Body of pancreas (tissue), 4 donors: ENCODE measurements at regions of chr6 and their contacts with region 1.

Region 1: DNA sequence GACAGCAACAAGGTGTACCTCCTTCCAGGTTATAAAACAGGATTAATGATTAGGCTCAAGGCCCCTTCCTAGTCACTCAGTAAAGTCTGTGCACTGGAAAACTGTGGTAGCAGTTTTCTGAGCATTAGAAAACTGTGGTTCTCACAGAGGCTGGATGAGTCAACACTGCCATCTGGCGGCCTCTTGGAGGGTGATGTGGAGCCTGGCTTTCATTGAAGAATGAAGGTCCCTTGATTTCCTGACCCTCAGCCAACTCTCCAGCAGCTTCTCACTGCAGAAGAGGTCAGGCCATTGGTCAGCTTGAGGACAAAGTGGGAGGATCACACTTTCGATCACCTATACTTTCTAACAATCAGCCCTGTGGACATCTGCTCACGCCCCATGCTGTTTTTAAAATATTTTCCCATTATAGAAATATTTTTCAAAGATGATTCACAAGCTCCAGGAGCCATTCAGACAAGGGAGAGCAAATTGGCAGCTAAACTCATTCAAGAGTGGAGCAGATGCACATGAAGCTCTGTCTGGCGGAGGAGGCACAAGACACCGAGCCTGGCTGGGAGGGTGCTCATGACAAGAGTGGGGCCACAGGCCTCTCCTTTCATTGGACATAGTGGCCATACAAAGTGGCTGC is 23.2 kb downstream of the PSMB1 start:
- DNase-seq: peak; percentile 81 to 87 (median 84)
- ATAC-seq: peak; percentile 91
- H3K4me3 ChIP-seq: no peak overlapping the region
- H3K27ac ChIP-seq: no peak overlapping the region
- H3K4me1 ChIP-seq: no peaks in the 10 kb centered on the region
- H3K27me3 ChIP-seq: no peaks in the 10 kb centered on the region
- CTCF ChIP-seq: peak; percentile 79 to 89 (median 83)
- POLR2A ChIP-seq: no peak

Region 2: DNA sequence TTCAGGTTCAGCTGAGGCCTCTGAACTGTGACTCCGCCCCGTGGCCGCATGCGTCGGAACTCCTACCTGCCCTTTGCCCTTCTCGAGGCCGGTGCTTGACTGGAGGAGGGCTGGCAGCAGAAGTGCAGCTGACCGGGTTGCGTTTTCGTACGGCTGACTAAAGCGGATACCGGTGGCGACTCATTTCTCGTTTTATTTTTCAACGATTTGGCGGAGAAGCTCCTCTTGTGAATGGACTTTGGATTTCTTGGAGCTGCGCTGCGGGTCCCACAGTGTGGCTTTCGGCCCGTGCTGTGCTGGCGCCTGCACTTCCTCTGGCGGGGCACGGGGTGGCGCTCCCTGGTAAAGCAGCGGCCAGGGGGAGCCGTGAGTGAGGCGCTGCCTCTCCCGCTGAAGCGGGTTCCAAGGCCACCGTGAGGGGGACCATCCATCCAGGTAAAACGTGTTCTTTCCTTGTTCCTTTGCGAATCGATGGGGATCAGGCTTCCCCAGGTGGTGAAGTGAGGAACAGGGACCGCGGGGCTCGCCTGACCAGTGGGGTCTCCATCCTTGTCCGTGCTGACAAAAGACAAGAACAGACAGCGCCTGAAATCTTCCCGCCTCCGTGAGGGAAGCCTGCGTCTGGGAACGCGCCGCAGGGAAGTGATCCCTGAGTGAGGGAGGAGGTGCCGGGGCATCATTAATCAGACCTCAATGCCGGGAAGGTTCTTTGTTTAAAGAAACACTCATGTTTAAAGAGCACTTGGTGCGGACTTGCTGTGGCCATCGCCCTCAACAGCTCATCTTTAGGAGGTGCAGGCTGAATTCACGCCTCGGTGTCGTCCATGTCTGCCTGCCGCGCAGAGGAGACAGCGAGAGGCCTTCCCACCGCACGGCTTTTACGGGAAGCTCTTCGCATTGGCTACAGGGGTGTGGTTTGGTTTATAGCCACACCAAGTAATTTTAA is 739.7 kb before region 1 on chr6:
- intact Hi-C with region 1: loop called (anchors 10 kb)
- DNase-seq: peak; percentile 68 to 72 (median 71)
- ATAC-seq: peak; percentile 92
- H3K4me3 ChIP-seq: no peak overlapping the region
- H3K27ac ChIP-seq: peak overlapping the region; percentile 7 to 64 (median 46)
- H3K4me1 ChIP-seq: peaks cover 16% of the 10 kb centered on the region
- H3K27me3 ChIP-seq: no peaks in the 10 kb centered on the region
- CTCF ChIP-seq: peak; percentile 93 to 98 (median 98)
- POLR2A ChIP-seq: peak in 1 of 3 donors; percentile 11

Region 3: GRCh38 chr6:169824021-169824420 is 705.9 kb before region 1 on chr6:
- intact Hi-C with region 1: loop called (anchors 10 kb)
- DNase-seq: no peak
- ATAC-seq: no peak
- H3K4me3 ChIP-seq: no peak overlapping the region
- H3K27ac ChIP-seq: no peak overlapping the region
- H3K4me1 ChIP-seq: no peaks in the 10 kb centered on the region
- H3K27me3 ChIP-seq: no peaks in the 10 kb centered on the region
- CTCF ChIP-seq: no peak
- POLR2A ChIP-seq: no peak

Region 4: DNA sequence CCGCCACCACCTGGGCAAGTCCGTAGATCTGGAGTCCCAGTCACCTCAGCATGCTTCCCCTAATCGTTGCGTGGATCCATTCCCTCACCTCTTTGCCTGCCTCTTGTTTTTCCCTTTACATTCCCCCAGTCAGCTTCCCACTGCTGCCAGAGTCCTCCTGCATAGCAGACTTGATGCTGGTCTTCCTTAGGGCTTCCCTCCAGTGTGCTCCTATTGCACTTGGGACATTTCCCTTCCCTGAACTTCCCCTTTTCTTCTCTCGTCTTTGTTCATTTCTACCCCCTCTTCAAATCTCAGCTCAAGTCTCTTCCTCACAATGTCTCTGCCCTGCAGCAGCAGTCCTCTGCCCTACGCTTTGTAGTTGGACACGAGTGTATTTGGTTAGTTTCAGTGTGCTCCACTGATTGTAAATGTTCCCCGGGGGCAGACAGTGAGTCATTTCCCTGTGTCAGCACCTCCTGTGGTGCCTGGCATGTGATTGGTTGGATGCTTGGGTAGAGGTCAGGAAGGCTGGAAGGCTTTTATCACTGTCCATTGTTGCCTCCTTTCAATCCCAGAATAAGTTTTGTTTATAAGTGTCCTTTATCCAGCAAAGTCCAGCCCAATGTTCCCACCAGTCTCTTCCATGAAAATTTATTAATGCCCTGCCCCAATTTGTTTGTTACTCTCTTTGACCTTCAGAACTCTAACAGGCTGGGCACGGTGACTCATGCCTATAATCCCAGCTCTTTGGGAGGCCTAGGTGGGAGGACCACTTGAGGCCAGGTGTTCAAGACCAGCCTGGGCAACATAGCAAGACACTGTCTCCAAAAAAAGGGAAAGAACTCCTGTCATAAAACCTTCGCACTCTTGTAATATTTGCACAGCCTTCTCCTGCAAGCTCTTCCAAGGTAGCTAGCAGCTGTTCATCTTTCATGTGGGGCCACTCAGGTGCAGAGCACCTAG is 185.1 kb before region 1 on chr6:
- intact Hi-C with region 1: no loop called
- DNase-seq: peak in 1 of 4 donors; percentile 25
- ATAC-seq: peak; percentile 58
- H3K4me3 ChIP-seq: no peak overlapping the region
- H3K27ac ChIP-seq: peak overlapping the region in 1 of 4 donors; percentile 20
- H3K4me1 ChIP-seq: peaks cover 4% of the 10 kb centered on the region
- H3K27me3 ChIP-seq: no peaks in the 10 kb centered on the region
- CTCF ChIP-seq: no peak
- POLR2A ChIP-seq: no peak

Region 5: GRCh38 chr6:170438402-170438753 is 91.6 kb before region 1 on chr6:
- intact Hi-C with region 1: no loop called
- DNase-seq: peak; percentile 87 to 96 (median 93)
- ATAC-seq: peak; percentile 97
- H3K4me3 ChIP-seq: no peak overlapping the region
- H3K27ac ChIP-seq: peak overlapping the region in 3 of 4 donors; percentile 47 to 80 (median 68)
- H3K4me1 ChIP-seq: peaks cover 9% of the 10 kb centered on the region
- H3K27me3 ChIP-seq: no peaks in the 10 kb centered on the region
- CTCF ChIP-seq: no peak
- POLR2A ChIP-seq: peak in 2 of 3 donors; percentile 50 to 55

Region 6: GRCh38 chr6:170476360-170476759 is 53.6 kb before region 1 on chr6:
- intact Hi-C with region 1: no loop called
- DNase-seq: peak in 1 of 4 donors; percentile 28
- ATAC-seq: no peak
- H3K4me3 ChIP-seq: no peak overlapping the region
- H3K27ac ChIP-seq: no peak overlapping the region
- H3K4me1 ChIP-seq: peaks cover 15% of the 10 kb centered on the region
- H3K27me3 ChIP-seq: no peaks in the 10 kb centered on the region
- CTCF ChIP-seq: no peak
- POLR2A ChIP-seq: no peak

Region 7: DNA sequence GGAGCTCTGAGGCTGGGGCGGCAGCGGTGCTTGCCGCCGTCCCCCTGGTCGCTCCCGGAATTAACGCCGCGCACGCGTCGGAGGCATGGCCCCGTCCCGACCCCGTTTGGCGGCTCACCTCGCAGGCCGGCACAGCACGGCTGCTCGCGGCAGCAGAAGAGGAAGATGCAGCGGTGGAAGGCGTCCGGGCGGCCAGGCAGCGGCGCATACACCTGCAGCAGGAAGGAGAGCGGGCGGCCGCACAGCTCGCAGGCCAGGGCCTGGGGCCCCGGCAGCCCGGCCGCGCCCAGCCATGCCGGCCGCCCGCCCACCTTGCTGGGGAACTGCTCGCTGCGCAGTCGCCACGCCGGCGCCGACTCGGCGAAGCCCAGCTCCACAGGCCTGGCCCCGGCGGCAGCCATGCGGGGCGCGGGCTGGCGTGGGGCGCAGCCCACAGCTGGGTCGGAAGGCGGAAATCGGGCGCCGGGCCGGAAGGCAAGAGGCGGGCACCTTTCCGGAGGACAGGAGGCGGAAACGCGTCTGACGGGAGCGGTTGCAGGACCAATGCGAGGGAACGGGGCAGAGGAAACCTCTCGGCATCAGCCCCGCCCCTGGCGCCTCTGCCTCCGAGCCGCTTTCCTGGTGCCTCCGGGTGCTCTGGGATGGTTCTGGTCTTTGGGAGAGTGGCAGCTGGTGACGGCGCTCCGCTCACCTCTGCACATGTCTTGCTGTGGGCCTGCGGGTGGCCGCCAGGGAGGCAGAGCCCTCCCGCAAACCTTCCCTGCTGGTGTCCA is 54.4 kb after region 1 on chr6 and contains the start of gene PDCD2:
- intact Hi-C with region 1: no loop called
- DNase-seq: peak; percentile 92 to 94 (median 92)
- ATAC-seq: peak; percentile 98
- H3K4me3 ChIP-seq: peak within 1 kb of the TSS; percentile 55 to 99
- H3K27ac ChIP-seq: peak within 1 kb of the TSS; percentile 55 to 93 (median 72)
- H3K4me1 ChIP-seq: peaks cover 19% of the 10 kb centered on the region
- H3K27me3 ChIP-seq: no peaks in the 10 kb centered on the region
- CTCF ChIP-seq: peak in 1 of 7 experiments; percentile 3
- POLR2A ChIP-seq: peak; percentile 51 to 68 (median 68)
- total RNA-seq, gene PDCD2: 41.5 to 65.6 TPM